Calu3 (cell line): ENCODE measurements at regions of chr3 and their contacts with region 1.

Region 1: DNA sequence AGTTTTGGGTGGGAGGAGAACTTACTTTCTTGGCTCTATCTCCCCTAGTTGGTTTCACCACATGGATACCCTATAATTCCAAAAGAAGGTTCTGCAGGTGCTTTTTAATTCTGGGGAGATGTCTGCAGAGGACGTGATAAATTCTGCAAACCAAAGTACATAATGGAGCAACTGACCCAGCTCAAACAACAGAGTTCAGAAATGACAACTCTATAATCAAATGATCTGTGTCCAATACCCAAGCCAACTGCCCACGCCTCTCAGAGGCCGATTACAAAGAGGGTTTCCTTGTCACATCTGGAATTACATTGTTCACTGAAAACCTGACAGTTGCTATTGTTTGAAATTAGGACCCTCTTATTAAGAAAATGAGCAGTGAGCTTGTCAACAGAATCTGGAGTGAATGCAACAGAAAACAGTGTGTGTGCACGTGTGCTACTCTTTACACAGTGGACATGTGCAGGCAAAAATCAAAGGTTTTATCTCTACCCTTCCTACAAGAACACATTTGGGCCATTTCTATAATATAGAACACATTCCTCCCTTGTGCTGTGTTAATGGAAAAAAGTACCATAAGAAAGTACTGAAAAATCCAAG is 593.0 kb downstream of the MAGI1 start:
- DNase-seq: no peak
- H3K4me3 Mint-ChIP-seq: no peak overlapping the region
- H3K27ac Mint-ChIP-seq: no peak overlapping the region
- H3K4me1 Mint-ChIP-seq: no peaks in the 10 kb centered on the region
- H3K27me3 Mint-ChIP-seq: no peaks in the 10 kb centered on the region
- CTCF ChIP-seq: no peak

Region 2: GRCh38 chr3:65473736-65474135 is 28.1 kb after region 1 on chr3:
- CTCF ChIA-PET with region 1: no interaction called
- intact Hi-C with region 1: loop called (anchors 1 kb)
- DNase-seq: no peak
- H3K4me3 Mint-ChIP-seq: no peak overlapping the region
- H3K27ac Mint-ChIP-seq: no peak overlapping the region
- H3K4me1 Mint-ChIP-seq: peaks cover 15% of the 10 kb centered on the region
- H3K27me3 Mint-ChIP-seq: no peaks in the 10 kb centered on the region
- CTCF ChIP-seq: no peak

Region 3: GRCh38 chr3:65655061-65655460 is 209.4 kb after region 1 on chr3:
- CTCF ChIA-PET with region 1: no interaction called
- intact Hi-C with region 1: no loop called
- DNase-seq: no peak
- H3K4me3 Mint-ChIP-seq: no peak overlapping the region
- H3K27ac Mint-ChIP-seq: no peak overlapping the region
- H3K4me1 Mint-ChIP-seq: no peaks in the 10 kb centered on the region
- H3K27me3 Mint-ChIP-seq: no peaks in the 10 kb centered on the region
- CTCF ChIP-seq: no peak

Region 4: GRCh38 chr3:65806600-65806999 is 360.9 kb after region 1 on chr3:
- CTCF ChIA-PET with region 1: no interaction called
- intact Hi-C with region 1: no loop called
- DNase-seq: no peak
- H3K4me3 Mint-ChIP-seq: no peak overlapping the region
- H3K27ac Mint-ChIP-seq: no peak overlapping the region
- H3K4me1 Mint-ChIP-seq: peaks cover 6% of the 10 kb centered on the region
- H3K27me3 Mint-ChIP-seq: no peaks in the 10 kb centered on the region
- CTCF ChIP-seq: no peak